ENCODE measurements at regions of chr6 and their contacts with region 1.

Region 1: GRCh38 chr6:11434565-11435326 is 102.8 kb upstream of the TMEM170B start:
- DNase-seq: peak; percentile 81 to 84
- H3K4me3 ChIP-seq: no peak overlapping the region; the same call in 1 of the 2 replicates
- H3K4me3 Mint-ChIP-seq: peak overlapping the region; percentile 28
- H3K27ac Mint-ChIP-seq: peak overlapping the region; percentile 58
- H3K4me1 ChIP-seq: peaks cover 50% of the 10 kb centered on the region
- H3K4me1 Mint-ChIP-seq: peaks cover 57% of the 10 kb centered on the region
- H3K27me3 ChIP-seq: no peaks in the 10 kb centered on the region
- H3K27me3 Mint-ChIP-seq: no peaks in the 10 kb centered on the region
- CTCF ChIP-seq: no peak

Region 2: DNA sequence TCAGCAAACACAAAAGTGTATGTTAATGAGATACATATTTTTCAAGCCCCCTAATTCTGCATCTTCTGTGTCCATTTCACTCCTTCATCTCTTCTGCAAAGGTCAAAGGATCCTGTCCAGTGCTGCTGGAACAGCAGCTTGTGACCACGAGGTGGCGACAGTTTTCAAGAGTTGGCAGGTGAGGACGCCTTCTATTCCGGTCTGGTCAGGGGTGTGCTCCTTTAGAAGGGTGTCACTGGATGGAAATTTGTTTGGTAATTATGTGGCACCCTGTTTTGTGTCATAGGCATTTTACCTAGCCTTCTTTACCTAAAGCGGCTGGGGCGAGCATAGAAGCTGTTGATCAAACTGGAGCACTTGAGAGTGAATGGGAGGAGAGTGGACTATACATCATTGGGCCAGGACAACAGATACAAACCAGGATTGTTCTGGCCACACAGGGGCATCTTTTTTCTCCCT is 290.3 kb before region 1 on chr6:
- CTCF ChIA-PET with region 1: interaction called, 4 read pairs
- POLR2A ChIA-PET with region 1: no interaction called
- intact Hi-C with region 1: loop called (anchors 10 kb)
- DNase-seq: peak; percentile 76 to 83
- H3K4me3 ChIP-seq: no peak overlapping the region
- H3K4me3 Mint-ChIP-seq: no peak overlapping the region
- H3K27ac Mint-ChIP-seq: peak overlapping the region; percentile 31
- H3K4me1 ChIP-seq: peaks cover 10% of the 10 kb centered on the region; the same call in 1 of the 2 replicates
- H3K4me1 Mint-ChIP-seq: peaks cover 19% of the 10 kb centered on the region
- H3K27me3 ChIP-seq: no peaks in the 10 kb centered on the region
- H3K27me3 Mint-ChIP-seq: no peaks in the 10 kb centered on the region
- CTCF ChIP-seq: peak; percentile 93 to 94

Region 3: GRCh38 chr6:11277275-11278206 is 157.2 kb before region 1 on chr6:
- CTCF ChIA-PET with region 1: no interaction called
- POLR2A ChIA-PET with region 1: no interaction called
- intact Hi-C with region 1: loop called (anchors 1 kb)
- DNase-seq: peak; percentile 77 to 84
- H3K4me3 ChIP-seq: no peak overlapping the region
- H3K4me3 Mint-ChIP-seq: peak overlapping the region; percentile 15
- H3K27ac Mint-ChIP-seq: peak overlapping the region; percentile 95
- H3K4me1 ChIP-seq: peaks cover 38% of the 10 kb centered on the region
- H3K4me1 Mint-ChIP-seq: peaks cover 39% of the 10 kb centered on the region
- H3K27me3 ChIP-seq: no peaks in the 10 kb centered on the region
- H3K27me3 Mint-ChIP-seq: no peaks in the 10 kb centered on the region
- CTCF ChIP-seq: no peak

Region 4: DNA sequence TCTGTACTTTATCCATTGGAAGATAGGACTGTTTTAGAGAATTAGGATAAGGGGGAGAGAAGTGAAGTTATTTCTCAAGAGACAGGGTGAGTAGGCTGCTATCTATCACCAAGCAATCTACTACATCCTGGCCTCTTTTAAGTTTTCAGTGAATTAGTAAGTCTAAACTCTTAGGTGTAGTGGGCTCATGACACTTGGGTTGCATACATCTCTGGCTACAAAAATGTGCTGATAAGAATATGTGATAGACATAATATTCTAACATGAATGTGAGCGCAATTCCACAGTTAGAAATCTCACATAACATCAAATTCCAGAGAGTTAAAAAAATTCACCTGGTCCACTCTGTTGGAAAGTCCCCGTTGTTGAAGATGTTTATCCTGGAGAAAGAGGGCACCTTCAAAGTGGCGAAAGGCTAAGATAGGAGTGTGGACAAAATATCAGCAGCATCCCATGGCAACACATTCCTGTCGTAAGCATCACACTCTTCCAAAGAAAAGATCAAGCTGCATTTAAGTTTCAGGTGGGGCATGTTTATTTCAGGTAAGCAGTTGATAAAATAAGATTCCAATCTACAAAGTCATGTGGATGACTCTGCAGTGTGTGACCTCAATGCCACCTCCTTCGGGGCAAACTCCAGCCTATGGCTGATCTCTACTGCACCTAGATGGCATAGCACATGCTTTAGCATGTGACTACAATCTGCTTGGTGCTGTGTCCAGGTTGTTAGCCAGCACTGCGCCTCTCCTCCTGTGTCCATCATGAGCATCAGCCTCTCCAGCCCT is 90.6 kb before region 1 on chr6:
- CTCF ChIA-PET with region 1: no interaction called
- POLR2A ChIA-PET with region 1: no interaction called
- intact Hi-C with region 1: loop called (anchors 1 kb)
- DNase-seq: peak; percentile 85 to 90
- H3K4me3 ChIP-seq: no peak overlapping the region
- H3K4me3 Mint-ChIP-seq: peak overlapping the region; percentile 35
- H3K27ac Mint-ChIP-seq: peak overlapping the region; percentile 92
- H3K4me1 ChIP-seq: peaks cover 42% of the 10 kb centered on the region
- H3K4me1 Mint-ChIP-seq: peaks cover 44% of the 10 kb centered on the region
- H3K27me3 ChIP-seq: no peaks in the 10 kb centered on the region
- H3K27me3 Mint-ChIP-seq: no peaks in the 10 kb centered on the region
- CTCF ChIP-seq: no peak

Region 5: DNA sequence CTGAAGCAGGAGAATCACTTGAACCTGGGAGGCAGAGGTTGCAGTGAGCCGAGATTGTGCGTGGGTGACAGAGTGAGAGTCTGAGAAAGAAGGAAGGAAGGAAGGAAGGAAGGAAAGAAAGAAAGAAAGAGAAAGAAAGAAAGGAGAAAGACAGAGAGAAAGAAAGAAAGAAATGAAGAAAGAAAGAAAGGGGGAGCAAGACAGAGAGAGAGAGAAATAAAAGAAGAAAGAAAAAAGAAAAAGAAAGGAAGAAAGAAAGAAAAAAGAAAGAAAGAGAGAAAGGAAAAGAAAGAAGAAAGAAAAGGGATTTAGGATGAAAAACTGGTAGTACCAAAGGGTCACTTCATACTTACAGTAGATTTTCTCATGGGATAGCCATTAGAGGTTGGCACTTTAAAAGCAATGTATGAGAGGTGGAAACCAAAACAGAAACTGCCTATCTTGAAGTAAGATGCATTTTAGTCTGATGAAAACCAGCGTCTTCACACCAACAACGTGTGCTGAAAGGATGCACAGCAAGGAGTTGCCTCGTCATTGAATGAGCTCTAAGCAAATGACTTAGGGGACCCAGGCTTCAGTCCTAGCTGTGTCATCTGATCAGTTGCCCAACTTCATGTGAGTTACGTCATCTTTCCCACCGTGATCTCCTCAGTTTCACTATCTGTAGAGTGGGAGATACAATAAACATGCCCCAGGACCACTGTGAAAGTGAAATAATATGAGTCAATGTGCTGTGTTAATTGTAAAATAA is 68.4 kb before region 1 on chr6:
- CTCF ChIA-PET with region 1: no interaction called
- POLR2A ChIA-PET with region 1: interaction called, 5 read pairs
- intact Hi-C with region 1: loop called (anchors 1 kb)
- DNase-seq: no peak
- H3K4me3 ChIP-seq: no peak overlapping the region
- H3K4me3 Mint-ChIP-seq: peak overlapping the region; percentile 46
- H3K27ac Mint-ChIP-seq: peak overlapping the region; percentile 99
- H3K4me1 ChIP-seq: peaks cover 59% of the 10 kb centered on the region
- H3K4me1 Mint-ChIP-seq: peaks cover 51% of the 10 kb centered on the region
- H3K27me3 ChIP-seq: no peaks in the 10 kb centered on the region
- H3K27me3 Mint-ChIP-seq: no peaks in the 10 kb centered on the region
- CTCF ChIP-seq: no peak

Region 6: DNA sequence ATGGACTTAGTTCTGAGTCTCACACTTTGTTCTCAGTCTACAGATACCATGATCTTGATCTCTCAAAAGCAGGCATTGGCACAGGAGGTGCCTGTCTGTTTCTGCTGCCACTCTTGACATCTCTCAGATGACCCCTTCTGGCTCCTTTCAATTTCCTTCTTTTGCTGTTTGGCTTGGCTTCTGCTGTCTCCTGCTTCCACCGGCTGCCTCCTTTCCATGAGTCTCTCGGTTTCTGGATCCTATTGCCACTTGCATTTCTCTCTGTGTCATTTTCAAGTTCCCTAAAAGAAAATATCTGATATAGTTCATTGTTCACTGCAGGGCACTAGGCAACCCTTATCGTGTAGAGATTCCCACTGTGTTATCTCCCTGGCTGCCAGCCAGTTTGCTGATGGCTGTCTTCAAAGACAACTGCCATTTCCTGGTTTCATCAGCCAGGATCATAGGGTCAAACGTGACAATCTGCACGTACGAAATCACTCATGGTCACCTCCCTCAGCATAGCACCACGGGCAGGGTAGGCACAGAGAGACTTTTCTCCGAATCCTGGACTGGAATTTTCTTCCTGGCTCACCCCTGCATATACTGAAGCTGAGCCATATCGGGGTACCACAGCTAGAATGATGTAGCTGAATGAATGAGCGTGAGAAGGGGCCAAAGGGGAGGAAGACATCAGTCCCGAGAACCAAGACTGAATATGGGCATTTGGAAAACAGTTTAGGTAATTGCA is 41.8 kb before region 1 on chr6:
- CTCF ChIA-PET with region 1: no interaction called
- POLR2A ChIA-PET with region 1: interaction called, 6 read pairs
- intact Hi-C with region 1: loop called (anchors 1 kb)
- DNase-seq: peak; percentile 57 to 67
- H3K4me3 ChIP-seq: no peak overlapping the region
- H3K4me3 Mint-ChIP-seq: no peak overlapping the region
- H3K27ac Mint-ChIP-seq: peak overlapping the region; percentile 89
- H3K4me1 ChIP-seq: peaks cover 58% of the 10 kb centered on the region
- H3K4me1 Mint-ChIP-seq: peaks cover 37% of the 10 kb centered on the region
- H3K27me3 ChIP-seq: no peaks in the 10 kb centered on the region
- H3K27me3 Mint-ChIP-seq: no peaks in the 10 kb centered on the region
- CTCF ChIP-seq: no peak

Region 7: GRCh38 chr6:11424395-11425050 is 10.2 kb before region 1 on chr6:
- CTCF ChIA-PET with region 1: no interaction called
- POLR2A ChIA-PET with region 1: no interaction called
- intact Hi-C with region 1: loop called (anchors 1 kb)
- DNase-seq: no peak
- H3K4me3 ChIP-seq: no peak overlapping the region
- H3K4me3 Mint-ChIP-seq: no peak overlapping the region
- H3K27ac Mint-ChIP-seq: peak overlapping the region; percentile 11
- H3K4me1 ChIP-seq: peaks cover 47% of the 10 kb centered on the region
- H3K4me1 Mint-ChIP-seq: peaks cover 49% of the 10 kb centered on the region
- H3K27me3 ChIP-seq: no peaks in the 10 kb centered on the region
- H3K27me3 Mint-ChIP-seq: no peaks in the 10 kb centered on the region
- CTCF ChIP-seq: no peak

Measured in Caco-2 (cell line).